MCF 10A (cell line): ENCODE measurements at regions of chr10 and their contacts with region 1.

Region 1: DNA sequence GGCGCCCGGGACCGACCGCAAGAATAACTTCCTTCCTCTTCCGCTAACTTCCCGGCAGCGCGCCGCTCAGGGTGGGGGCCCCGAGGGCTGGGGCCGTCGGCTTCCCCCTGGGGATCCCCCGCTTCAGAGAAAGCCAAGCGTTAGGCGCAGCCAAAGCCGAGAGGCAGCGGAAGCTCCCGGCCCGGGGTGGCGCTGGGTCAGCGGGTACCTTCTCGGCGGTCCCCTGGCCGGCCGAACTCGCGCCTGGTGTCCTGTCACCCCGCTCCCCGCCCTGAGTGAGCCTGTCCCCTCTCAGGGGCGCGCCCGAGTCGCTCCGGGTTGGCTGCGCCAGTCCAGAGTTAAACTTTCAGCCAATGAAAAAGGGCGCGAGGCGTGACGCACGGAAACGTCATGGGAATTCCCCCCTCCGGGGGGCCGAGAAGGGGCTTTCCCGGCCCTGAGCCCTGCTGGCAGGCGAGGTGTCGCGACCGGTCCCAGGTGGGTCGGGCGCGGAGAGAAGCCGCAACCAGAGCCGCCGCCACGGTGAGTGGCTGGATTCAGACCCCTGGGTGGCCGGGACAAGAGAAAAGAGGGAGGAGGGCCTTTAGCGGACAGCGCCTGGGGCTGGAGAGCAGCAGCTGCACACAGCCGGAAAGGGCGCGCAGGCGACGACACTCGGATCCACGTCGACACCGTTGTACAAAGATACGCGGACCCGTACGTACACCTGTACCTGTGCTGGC is 1.3 kb upstream of the NFKB2 start:
- DNase-seq: peak; percentile 96
- H3K4me3 Mint-ChIP-seq: peak overlapping the region; percentile 92
- H3K27ac Mint-ChIP-seq: peak overlapping the region; percentile 99
- H3K4me1 Mint-ChIP-seq: peaks cover 7% of the 10 kb centered on the region
- H3K27me3 Mint-ChIP-seq: no peaks in the 10 kb centered on the region
- CTCF ChIP-seq: no peak

Region 2: DNA sequence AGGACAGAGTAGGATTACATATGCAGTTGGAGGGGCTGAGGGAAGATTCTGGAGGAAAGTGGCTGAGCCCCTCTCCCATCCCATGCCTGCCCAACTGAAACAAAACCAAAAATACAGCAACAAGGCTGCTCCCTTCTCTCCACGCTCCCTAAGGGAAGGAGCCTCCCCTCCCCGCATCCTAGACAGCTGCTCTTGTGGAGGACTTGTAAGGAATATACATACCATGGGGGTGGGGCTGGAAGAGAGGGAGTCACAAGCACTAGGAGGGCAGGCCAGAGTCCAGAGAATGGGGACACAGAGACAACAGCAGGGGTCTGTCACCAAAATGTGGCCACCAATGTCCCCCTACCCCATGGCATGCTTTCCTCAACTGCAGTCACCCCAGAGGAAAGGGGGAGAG is 287.2 kb before region 1 on chr10:
- CTCF ChIA-PET with region 1: no interaction called
- POLR2A ChIA-PET with region 1: no interaction called
- intact Hi-C with region 1: no loop called
- DNase-seq: no peak
- H3K4me3 Mint-ChIP-seq: no peak overlapping the region
- H3K27ac Mint-ChIP-seq: no peak overlapping the region
- H3K4me1 Mint-ChIP-seq: no peaks in the 10 kb centered on the region
- H3K27me3 Mint-ChIP-seq: no peaks in the 10 kb centered on the region
- CTCF ChIP-seq: no peak

Region 3: GRCh38 chr10:102245101-102245931 is 148.9 kb before region 1 on chr10 and contains the start of gene GBF1:
- CTCF ChIA-PET with region 1: interaction called, 7 read pairs
- POLR2A ChIA-PET with region 1: interaction called, 11 read pairs
- intact Hi-C with region 1: no loop called
- DNase-seq: peak; percentile 100
- H3K4me3 Mint-ChIP-seq: peak within 1 kb of the TSS; percentile 99
- H3K27ac Mint-ChIP-seq: peak within 1 kb of the TSS; percentile 97
- H3K4me1 Mint-ChIP-seq: peaks cover 45% of the 10 kb centered on the region
- H3K27me3 Mint-ChIP-seq: no peaks in the 10 kb centered on the region
- CTCF ChIP-seq: no peak
- total RNA-seq, gene GBF1: 50.0 and 50.6 TPM in 2 replicates

Region 4: GRCh38 chr10:102384053-102384452 is 10.2 kb before region 1 on chr10:
- CTCF ChIA-PET with region 1: interaction called, 18 read pairs
- POLR2A ChIA-PET with region 1: interaction called, 14 read pairs
- intact Hi-C with region 1: no loop called
- DNase-seq: no peak
- H3K4me3 Mint-ChIP-seq: no peak overlapping the region
- H3K27ac Mint-ChIP-seq: no peak overlapping the region
- H3K4me1 Mint-ChIP-seq: no peaks in the 10 kb centered on the region
- H3K27me3 Mint-ChIP-seq: no peaks in the 10 kb centered on the region
- CTCF ChIP-seq: no peak

Region 5: GRCh38 chr10:102450194-102450938 is 56.1 kb after region 1 on chr10:
- CTCF ChIA-PET with region 1: interaction called, 5 read pairs
- POLR2A ChIA-PET with region 1: interaction called, 34 read pairs
- intact Hi-C with region 1: no loop called
- DNase-seq: peak; percentile 76
- H3K4me3 Mint-ChIP-seq: peak overlapping the region; percentile 89
- H3K27ac Mint-ChIP-seq: peak overlapping the region; percentile 80
- H3K4me1 Mint-ChIP-seq: peaks cover 7% of the 10 kb centered on the region
- H3K27me3 Mint-ChIP-seq: no peaks in the 10 kb centered on the region
- CTCF ChIP-seq: no peak

Region 6: DNA sequence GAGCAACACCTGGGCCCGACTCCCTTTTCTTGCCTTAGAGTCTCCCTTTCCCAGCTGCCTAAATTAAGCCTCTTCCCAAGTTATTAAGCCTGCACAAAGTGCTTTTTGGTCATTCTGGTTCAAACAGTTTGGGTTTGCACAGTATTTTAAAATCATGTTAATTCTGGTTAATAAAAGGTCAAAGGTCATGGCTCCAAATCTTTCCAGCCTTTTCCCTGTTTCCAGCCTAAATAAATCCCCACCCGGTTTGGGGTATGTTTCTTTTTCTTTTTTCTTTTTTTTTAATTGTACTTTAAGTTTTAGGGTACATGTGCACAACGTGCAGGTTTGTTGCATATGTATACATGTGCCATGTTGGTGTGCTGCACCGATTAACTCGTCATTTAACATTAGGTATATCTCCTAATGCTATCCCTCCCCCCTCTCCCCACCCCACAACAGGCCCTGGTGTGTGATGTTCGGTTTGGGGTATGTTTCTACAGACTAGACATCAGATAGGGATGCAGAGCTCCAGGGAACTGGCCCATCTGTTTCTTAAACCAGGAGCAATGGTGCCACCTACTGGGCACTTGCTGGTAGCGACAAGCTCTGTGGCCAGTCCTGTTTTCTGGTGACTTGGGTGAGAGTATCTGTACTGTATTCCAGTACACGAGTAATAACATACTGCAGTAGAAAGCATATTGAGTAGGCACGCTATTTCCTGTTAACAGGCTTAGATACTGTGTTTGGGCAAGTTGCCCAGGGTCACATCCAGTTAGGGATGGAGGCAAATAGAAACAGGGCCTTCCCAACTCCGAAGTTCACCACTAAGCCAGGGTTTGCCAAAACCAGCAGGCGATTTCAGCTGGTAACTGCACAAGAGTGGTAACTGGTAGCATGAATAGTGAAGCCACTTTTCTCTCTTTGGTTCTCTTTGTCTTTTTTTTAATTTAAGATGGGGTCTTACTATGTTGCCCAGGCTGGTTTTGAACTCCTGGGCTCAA is 189.5 kb after region 1 on chr10:
- CTCF ChIA-PET with region 1: interaction called, 4 read pairs
- POLR2A ChIA-PET with region 1: no interaction called
- intact Hi-C with region 1: loop called (anchors 2 kb)
- DNase-seq: peak; percentile 87
- H3K4me3 Mint-ChIP-seq: no peak overlapping the region
- H3K27ac Mint-ChIP-seq: no peak overlapping the region
- H3K4me1 Mint-ChIP-seq: no peaks in the 10 kb centered on the region
- H3K27me3 Mint-ChIP-seq: no peaks in the 10 kb centered on the region
- CTCF ChIP-seq: peak; percentile 78